ENCODE measurements at regions of chr12 and their contacts with region 1.

Region 1: GRCh38 chr12:101773650-101774162 is 34.4 kb upstream of the SYCP3 start:
- DNase-seq: peak; percentile 58
- H3K4me3 ChIP-seq: no peak overlapping the region
- H3K27ac ChIP-seq: no peak overlapping the region
- H3K4me1 ChIP-seq: no peaks in the 10 kb centered on the region
- H3K27me3 ChIP-seq: no peaks in the 10 kb centered on the region
- CTCF ChIP-seq: peak; percentile 86 to 97 (median 90)
- POLR2A ChIP-seq: no peak

Region 2: DNA sequence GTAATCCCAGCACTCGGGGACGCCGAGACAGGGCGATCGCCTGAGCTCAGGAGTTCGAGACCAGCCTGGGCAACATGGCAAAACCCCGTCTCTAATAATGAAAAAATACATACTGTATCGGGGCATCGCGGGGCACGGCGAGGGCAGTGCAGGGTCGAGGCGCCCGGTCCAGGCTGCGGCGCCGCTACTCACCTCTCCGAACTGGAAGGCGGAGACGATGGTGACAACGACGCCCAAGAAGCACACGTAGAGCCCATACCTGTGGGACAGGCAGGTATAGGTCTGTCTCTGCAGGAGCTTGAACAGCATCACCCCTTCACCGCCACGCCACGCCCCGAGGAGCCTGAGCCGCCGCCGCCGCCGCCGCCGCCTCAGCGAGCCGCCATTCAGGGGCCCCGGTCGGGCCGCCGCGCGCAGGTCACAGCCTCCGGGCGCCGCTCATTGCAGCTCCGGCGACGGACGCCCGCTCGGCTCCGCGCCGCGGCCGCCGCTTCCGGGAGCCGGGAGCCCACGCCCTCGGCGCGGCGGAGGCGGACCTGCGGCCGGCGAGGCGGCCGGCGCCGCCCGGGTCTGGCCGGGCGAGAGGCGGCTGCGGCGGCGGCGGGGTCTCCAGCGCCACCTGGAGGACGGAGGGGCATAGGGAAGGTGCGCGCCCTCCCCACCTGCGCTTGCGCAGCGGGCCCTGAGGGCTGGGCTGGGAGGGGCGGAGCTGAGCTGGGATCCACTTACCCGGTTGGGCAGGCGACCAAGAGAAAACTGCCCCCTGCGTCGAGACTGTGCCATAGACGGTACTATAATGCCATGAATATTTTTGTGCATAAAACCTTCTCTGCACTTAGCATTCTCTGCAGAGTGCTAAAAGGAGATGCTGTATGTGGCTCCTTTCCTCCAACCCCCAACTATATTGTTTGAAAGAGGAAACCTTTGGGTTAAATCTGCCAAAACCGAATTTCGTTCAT is 56.9 kb after region 1 on chr12 and contains the start of gene GNPTAB:
- intact Hi-C with region 1: loop called (anchors 10 kb)
- DNase-seq: peak; percentile 95
- H3K4me3 ChIP-seq: peak within 1 kb of the TSS; percentile 68 to 82
- H3K27ac ChIP-seq: peak within 1 kb of the TSS; percentile 59 to 79
- H3K4me1 ChIP-seq: peaks cover 3% of the 10 kb centered on the region
- H3K27me3 ChIP-seq: no peaks in the 10 kb centered on the region
- CTCF ChIP-seq: peak; percentile 55 to 90 (median 74)
- POLR2A ChIP-seq: no peak
- total RNA-seq, gene GNPTAB: 39.6 to 41.3 TPM

Measured in testis (tissue), 5 donors.